ENCODE measurements at regions of chr11 and their contacts with region 1.

Region 1: GRCh38 chr11:63945477-63946163 is 6.8 kb downstream of the NAA40 start:
- DNase-seq: peak; percentile 90
- H3K4me3 ChIP-seq: peak overlapping the region in 1 of 4 donors; percentile 11
- H3K27ac ChIP-seq: peak overlapping the region; percentile 74 to 81 (median 78)
- H3K4me1 ChIP-seq: peaks cover 0 to 22% (median 15%) of the 10 kb centered on the region in 4 donors
- H3K27me3 ChIP-seq: no peaks in the 10 kb centered on the region
- CTCF ChIP-seq: peak; percentile 79 to 90 (median 88)
- EP300 ChIP-seq: no peak
- POLR2A ChIP-seq: no peak

Region 2: DNA sequence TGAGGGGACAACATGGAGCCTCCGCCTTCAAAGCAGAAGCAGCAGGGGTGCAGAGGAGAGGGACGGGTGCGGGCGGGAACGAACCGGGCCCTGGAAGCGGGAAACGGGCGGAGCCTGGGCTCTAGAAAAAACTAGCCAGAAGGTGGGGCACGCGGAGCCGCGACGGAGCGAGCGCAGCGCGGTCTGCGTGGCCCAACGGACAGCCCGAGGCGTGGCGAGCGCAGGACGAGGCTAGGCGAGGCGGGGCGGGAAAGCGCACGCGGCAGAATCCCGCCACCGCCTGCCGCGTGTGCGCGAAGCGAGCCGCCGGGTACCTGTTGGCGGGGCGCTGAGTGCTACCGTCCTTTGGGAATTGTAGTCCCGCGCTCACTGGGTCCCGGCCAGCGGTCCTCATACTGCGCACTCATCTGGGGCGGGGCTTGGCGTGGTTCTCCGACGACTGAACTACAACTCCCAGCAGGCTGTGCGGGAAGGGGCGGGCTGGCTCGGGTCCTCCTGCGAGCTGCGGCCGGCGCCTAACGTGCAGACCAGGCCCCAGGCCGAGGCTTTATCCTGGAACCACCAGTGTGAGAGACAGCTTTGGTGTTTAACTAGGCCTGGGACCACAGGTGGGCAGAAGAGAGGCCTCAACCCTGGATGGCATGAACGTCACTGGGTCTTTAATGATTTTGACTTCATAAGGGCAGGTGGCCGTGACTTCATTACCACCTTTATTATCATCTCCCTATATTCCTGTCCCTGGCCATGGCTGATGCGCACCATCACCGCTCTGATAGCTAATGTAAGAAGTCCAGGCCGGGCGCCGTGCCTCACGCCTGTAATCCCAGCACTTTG is 274.1 kb before region 1 on chr11 and contains the start of gene ATL3:
- intact Hi-C with region 1: loop called (anchors 2 kb)
- DNase-seq: peak; percentile 99
- H3K4me3 ChIP-seq: peak within 1 kb of the TSS; percentile 66 to 81 (median 74)
- H3K27ac ChIP-seq: peak within 1 kb of the TSS; percentile 96 to 98 (median 98)
- H3K4me1 ChIP-seq: peaks cover 0 to 42% (median 40%) of the 10 kb centered on the region in 4 donors
- H3K27me3 ChIP-seq: no peaks in the 10 kb centered on the region
- CTCF ChIP-seq: no peak
- EP300 ChIP-seq: no peak
- POLR2A ChIP-seq: no peak
- total RNA-seq, gene ATL3: 97.8 to 115 (median 102) TPM

Region 3: DNA sequence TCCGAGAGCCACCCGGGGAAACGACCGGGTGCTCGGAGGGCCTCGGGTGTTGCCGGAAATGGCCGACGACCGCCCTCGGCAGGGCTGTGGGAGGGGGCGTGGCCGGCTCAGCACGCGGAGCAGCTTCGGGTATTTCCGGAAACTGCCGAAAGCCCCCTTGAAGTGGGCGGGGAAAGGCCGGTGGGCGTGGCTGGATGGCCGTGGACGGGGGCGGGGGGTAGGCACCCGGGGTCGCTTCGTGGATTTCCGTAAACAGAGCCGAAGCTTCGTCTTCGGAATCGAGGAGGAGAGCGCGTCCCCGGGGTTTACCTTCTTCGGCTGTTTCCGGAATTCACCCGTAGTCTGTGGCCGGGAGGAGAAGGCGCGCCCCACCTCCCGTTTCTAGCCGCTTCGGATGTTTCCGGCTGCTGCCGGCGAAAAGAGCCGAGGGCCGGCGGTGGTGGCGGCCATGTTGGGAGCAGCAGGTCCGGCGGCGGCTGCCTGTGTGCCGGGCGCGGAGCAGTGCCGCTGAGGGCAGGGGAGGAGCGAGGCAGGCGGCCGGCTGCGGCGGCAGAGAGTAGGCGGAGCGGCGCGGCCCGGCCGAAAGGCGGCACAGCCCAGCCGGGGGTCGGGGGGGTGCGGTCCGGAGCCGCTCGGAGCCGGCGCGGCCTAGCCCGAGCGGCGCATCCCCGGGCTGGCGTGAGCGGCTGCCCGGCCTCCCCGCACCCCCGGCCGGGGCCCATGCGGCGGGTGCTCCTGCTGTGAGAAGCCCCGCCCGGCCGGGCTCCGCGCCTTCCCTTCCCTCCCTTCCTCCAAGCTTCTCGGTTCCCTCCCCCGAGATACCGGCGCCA is 106.7 kb before region 1 on chr11 and contains the start of gene MARK2:
- intact Hi-C with region 1: loop called (anchors 1 kb)
- DNase-seq: peak; percentile 99
- H3K4me3 ChIP-seq: peak within 1 kb of the TSS; percentile 71 to 95 (median 88)
- H3K27ac ChIP-seq: peak within 1 kb of the TSS; percentile 83 to 92 (median 87)
- H3K4me1 ChIP-seq: peaks cover 0 to 51% (median 48%) of the 10 kb centered on the region in 4 donors
- H3K27me3 ChIP-seq: no peaks in the 10 kb centered on the region
- CTCF ChIP-seq: no peak
- EP300 ChIP-seq: no peak
- POLR2A ChIP-seq: peak in 1 of 2 donors; percentile 35
- total RNA-seq, gene MARK2: 14.3 to 24.6 (median 18.2) TPM

Region 4: GRCh38 chr11:63906585-63906984 is 39.0 kb before region 1 on chr11:
- intact Hi-C with region 1: loop called (anchors 5 kb)
- DNase-seq: no peak
- H3K4me3 ChIP-seq: no peak overlapping the region
- H3K27ac ChIP-seq: no peak overlapping the region
- H3K4me1 ChIP-seq: peaks cover 0 to 27% (median 24%) of the 10 kb centered on the region in 4 donors
- H3K27me3 ChIP-seq: no peaks in the 10 kb centered on the region
- CTCF ChIP-seq: no peak
- EP300 ChIP-seq: no peak
- POLR2A ChIP-seq: no peak

Region 5: GRCh38 chr11:63933459-63933858 is 12.2 kb before region 1 on chr11:
- intact Hi-C with region 1: no loop called
- DNase-seq: no peak
- H3K4me3 ChIP-seq: no peak overlapping the region
- H3K27ac ChIP-seq: no peak overlapping the region
- H3K4me1 ChIP-seq: peaks cover 0 to 6% (median 3%) of the 10 kb centered on the region in 4 donors
- H3K27me3 ChIP-seq: no peaks in the 10 kb centered on the region
- CTCF ChIP-seq: no peak
- EP300 ChIP-seq: no peak
- POLR2A ChIP-seq: no peak